Mammary epithelial cell (primary cell): ENCODE measurements at regions of chr9 and their contacts with region 1.

Region 1: DNA sequence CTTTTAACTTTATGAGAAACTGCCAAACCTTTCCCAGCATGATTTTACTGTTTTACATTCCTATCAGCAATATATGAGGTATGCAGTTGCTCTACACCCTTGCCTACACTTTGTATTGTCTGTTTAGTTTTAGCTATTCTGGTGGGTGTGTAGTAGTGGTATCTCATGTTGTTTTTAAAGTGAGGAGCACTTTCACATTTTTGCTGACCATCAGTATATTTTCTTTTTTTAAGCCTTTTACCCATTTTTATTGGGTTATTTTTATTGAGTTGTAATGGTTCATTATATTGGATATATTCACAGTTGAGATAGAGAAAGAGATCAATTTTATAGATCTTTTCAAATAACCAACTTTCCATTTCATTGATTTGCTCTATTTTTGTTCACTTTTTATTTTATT is 102.4 kb downstream of the BARX1 start:
- DNase-seq: no peak
- H3K4me3 ChIP-seq: no peak overlapping the region
- H3K27ac ChIP-seq: no peak overlapping the region
- H3K4me1 ChIP-seq: no peaks in the 10 kb centered on the region
- H3K27me3 ChIP-seq: peaks cover 3% of the 10 kb centered on the region
- CTCF ChIP-seq: no peak

Region 2: DNA sequence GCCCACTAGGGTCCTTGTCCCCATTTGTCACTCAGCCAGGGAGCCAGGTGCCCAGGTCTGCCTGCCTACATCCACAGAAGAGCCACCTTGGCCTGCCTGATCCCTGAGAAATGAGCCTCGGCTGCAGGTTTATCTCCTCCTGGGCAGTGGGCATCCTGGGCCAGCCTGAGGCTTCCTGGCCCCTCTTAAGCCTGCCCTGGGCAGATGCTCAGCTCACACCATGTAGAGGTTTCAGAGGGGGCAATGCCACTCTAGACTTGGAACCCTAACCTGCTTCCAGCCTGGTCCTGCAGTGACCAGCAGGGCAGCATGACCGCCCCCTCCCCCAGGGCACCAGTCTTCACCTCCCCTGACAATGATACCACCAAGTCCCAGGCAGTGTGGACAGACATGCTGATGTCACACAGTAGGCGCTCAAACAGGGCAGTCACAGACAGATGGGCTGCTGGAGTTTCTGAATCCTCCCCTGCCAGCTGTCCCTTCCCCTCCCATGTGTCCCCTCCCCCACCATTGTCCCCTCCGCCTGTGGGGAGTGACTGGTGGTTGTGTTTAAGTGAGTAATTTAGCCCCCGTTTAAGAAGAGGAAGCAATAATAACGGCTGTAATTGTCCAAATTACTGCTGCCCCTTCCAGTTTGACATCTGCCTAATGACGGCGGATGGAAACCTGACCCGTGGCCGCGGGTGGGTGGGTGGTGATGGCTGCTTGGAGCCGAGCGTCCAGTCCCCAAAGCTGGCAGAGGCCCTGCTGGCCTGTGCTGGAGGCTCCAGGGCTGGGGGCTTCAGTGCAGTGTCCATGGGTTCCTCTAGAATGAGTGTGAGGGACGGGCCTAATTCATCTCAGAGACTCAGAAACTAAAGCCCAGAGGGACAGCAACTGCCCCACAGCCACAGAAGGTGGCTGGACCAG is 45.3 kb before region 1 on chr9:
- CTCF ChIA-PET with region 1: no interaction called
- dilution Hi-C with region 1: no loop called
- in situ Hi-C with region 1: no loop called
- intact Hi-C with region 1: loop called (anchors 1 kb)
- DNase-seq: no peak
- H3K4me3 ChIP-seq: no peak overlapping the region
- H3K27ac ChIP-seq: no peak overlapping the region
- H3K4me1 ChIP-seq: no peaks in the 10 kb centered on the region
- H3K27me3 ChIP-seq: no peaks in the 10 kb centered on the region
- CTCF ChIP-seq: no peak

Region 3: GRCh38 chr9:93908591-93909511 is 56.1 kb after region 1 on chr9:
- CTCF ChIA-PET with region 1: no interaction called
- dilution Hi-C with region 1: no loop called
- in situ Hi-C with region 1: no loop called
- intact Hi-C with region 1: no loop called
- DNase-seq: no peak
- H3K4me3 ChIP-seq: no peak overlapping the region
- H3K27ac ChIP-seq: no peak overlapping the region
- H3K4me1 ChIP-seq: no peaks in the 10 kb centered on the region
- H3K27me3 ChIP-seq: no peaks in the 10 kb centered on the region
- CTCF ChIP-seq: no peak

Region 4: GRCh38 chr9:93962561-93963440 is 110.1 kb after region 1 on chr9:
- CTCF ChIA-PET with region 1: no interaction called
- dilution Hi-C with region 1: no loop called
- in situ Hi-C with region 1: no loop called
- intact Hi-C with region 1: no loop called
- DNase-seq: peak; percentile 61
- H3K4me3 ChIP-seq: no peak overlapping the region
- H3K27ac ChIP-seq: no peak overlapping the region
- H3K4me1 ChIP-seq: peaks cover 5% of the 10 kb centered on the region
- H3K27me3 ChIP-seq: peaks cover 28% of the 10 kb centered on the region
- CTCF ChIP-seq: peak; percentile 77 to 79

Region 5: GRCh38 chr9:93978551-93978950 is 125.8 kb after region 1 on chr9:
- CTCF ChIA-PET with region 1: no interaction called
- dilution Hi-C with region 1: no loop called
- in situ Hi-C with region 1: no loop called
- intact Hi-C with region 1: no loop called
- DNase-seq: no peak
- H3K4me3 ChIP-seq: no peak overlapping the region
- H3K27ac ChIP-seq: no peak overlapping the region
- H3K4me1 ChIP-seq: peaks cover 10% of the 10 kb centered on the region
- H3K27me3 ChIP-seq: no peaks in the 10 kb centered on the region
- CTCF ChIP-seq: no peak

Region 6: GRCh38 chr9:94108584-94108983 is 255.9 kb after region 1 on chr9:
- CTCF ChIA-PET with region 1: no interaction called
- dilution Hi-C with region 1: no loop called
- in situ Hi-C with region 1: no loop called
- intact Hi-C with region 1: no loop called
- DNase-seq: no peak
- H3K4me3 ChIP-seq: no peak overlapping the region
- H3K27ac ChIP-seq: no peak overlapping the region
- H3K4me1 ChIP-seq: peaks cover 17% of the 10 kb centered on the region
- H3K27me3 ChIP-seq: no peaks in the 10 kb centered on the region
- CTCF ChIP-seq: no peak